PC-3 (cell line): ENCODE measurements at regions of chr3 and their contacts with region 1.

Region 1: GRCh38 chr3:128584412-128585020 is 66.1 kb downstream of the RPN1 start:
- DNase-seq: peak; percentile 85
- ATAC-seq: peak; percentile 100
- H3K4me3 ChIP-seq: no peak overlapping the region
- H3K27ac ChIP-seq: no peak overlapping the region
- H3K4me1 ChIP-seq: peaks cover 7% of the 10 kb centered on the region; the same call in 1 of the 2 replicates
- H3K27me3 ChIP-seq: no peaks in the 10 kb centered on the region
- CTCF ChIP-seq: peak; percentile 84

Region 2: GRCh38 chr3:128170805-128171516 is 413.6 kb before region 1 on chr3:
- CTCF ChIA-PET with region 1: no interaction called
- POLR2A ChIA-PET with region 1: no interaction called
- intact Hi-C with region 1: loop called (anchors 2 kb)
- DNase-seq: peak; percentile 73
- ATAC-seq: peak; percentile 97
- H3K4me3 ChIP-seq: no peak overlapping the region
- H3K27ac ChIP-seq: no peak overlapping the region
- H3K4me1 ChIP-seq: no peaks in the 10 kb centered on the region
- H3K27me3 ChIP-seq: no peaks in the 10 kb centered on the region
- CTCF ChIP-seq: peak; percentile 79

Region 3: GRCh38 chr3:128307029-128307633 is 277.4 kb before region 1 on chr3:
- CTCF ChIA-PET with region 1: no interaction called
- POLR2A ChIA-PET with region 1: no interaction called
- intact Hi-C with region 1: loop called (anchors 10 kb)
- DNase-seq: peak; percentile 7
- ATAC-seq: peak; percentile 48
- H3K4me3 ChIP-seq: no peak overlapping the region
- H3K27ac ChIP-seq: no peak overlapping the region
- H3K4me1 ChIP-seq: no peaks in the 10 kb centered on the region
- H3K27me3 ChIP-seq: no peaks in the 10 kb centered on the region
- CTCF ChIP-seq: peak; percentile 37

Region 4: DNA sequence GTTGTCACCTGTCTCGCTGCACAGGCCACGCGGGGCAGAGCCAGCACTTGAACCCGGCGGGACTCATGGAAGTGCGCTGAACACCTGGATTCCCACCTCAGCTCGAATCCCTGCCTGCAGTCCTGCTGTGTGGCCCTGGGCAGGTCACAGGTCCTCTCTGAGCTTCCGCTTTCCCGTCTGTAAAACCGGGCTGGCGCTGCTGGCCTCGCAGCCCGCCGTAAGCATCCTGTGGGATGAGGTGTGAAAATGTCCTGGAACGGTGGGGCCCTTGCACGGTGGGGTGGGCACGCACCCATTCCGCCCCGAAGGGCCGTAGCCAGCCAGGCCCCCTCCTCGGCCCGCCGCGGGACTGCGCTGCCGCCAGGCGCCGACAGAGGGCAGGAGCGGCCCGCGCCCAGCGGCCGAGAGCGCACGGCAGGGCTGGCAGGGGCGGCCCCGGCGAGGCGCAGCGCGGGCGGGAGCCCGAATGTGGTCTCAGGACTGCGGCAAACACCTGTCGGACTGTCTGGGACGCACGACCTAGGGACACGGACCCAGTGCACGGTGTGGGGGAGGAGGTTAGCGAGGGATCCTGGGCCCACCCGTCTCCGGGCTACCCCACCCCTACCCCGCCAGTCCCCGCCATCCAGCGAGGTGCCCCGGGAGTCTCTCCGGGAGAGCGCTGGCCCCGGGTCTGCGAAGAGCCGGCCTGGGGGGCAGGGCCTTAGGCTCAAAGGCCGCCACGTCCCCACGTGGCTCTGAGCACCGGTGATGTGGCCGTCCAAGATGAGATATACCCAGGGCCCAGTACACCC is 158.2 kb before region 1 on chr3:
- CTCF ChIA-PET with region 1: interaction called, 4 read pairs
- POLR2A ChIA-PET with region 1: no interaction called
- intact Hi-C with region 1: loop called (anchors 1 kb)
- DNase-seq: peak; percentile 56
- ATAC-seq: peak; percentile 85
- H3K4me3 ChIP-seq: peak overlapping the region; percentile 47; the same call in 1 of the 2 replicates
- H3K27ac ChIP-seq: no peak overlapping the region
- H3K4me1 ChIP-seq: peaks cover 20% of the 10 kb centered on the region; the same call in 1 of the 2 replicates
- H3K27me3 ChIP-seq: no peaks in the 10 kb centered on the region
- CTCF ChIP-seq: peak; percentile 61

Region 5: GRCh38 chr3:128503164-128503651 is 81.3 kb before region 1 on chr3:
- CTCF ChIA-PET with region 1: no interaction called
- POLR2A ChIA-PET with region 1: no interaction called
- intact Hi-C with region 1: loop called (anchors 10 kb)
- DNase-seq: peak; percentile 37
- ATAC-seq: peak; percentile 46; the same call in 1 of the 2 replicates
- H3K4me3 ChIP-seq: no peak overlapping the region
- H3K27ac ChIP-seq: no peak overlapping the region
- H3K4me1 ChIP-seq: peaks cover 10% of the 10 kb centered on the region
- H3K27me3 ChIP-seq: no peaks in the 10 kb centered on the region
- CTCF ChIP-seq: peak; percentile 46; the same call in 1 of the 2 replicates